ENCODE measurements at regions of chr20 and their contacts with region 1.

Region 1: DNA sequence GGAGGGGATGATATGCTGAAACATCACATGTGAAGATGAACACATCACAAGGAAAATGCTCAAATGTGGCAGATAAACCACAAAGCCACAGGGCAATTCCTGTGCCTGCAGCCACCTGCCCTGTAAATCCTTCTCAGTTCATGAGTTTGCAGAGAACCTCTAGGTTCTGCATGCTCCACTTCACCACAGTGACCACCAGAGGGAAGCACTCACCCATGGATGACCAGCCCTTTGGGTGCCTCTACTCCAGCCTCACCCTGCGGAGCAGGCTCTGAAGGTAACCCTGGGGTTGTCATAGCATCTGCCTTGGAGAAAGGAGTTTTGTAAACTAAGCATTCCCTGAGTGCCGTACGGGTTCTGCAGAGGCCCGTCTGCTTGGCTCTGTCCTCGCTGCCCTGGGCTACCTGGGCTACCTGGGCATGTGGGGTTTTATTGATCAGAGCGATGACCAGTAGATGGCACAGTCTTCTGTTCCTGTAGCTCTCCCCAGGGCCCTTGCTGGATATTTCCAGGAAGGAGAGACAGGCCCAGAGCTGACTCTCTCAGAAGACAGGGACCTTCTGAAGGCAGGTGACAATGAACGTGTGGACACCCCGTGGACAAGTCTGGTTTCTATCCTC is 31.7 kb upstream of the CST1 start:
- H3K4me3 ChIP-seq: no peak overlapping the region
- H3K27ac ChIP-seq: no peak overlapping the region
- H3K4me1 ChIP-seq: no peaks in the 10 kb centered on the region
- CTCF ChIP-seq: no peak

Region 2: DNA sequence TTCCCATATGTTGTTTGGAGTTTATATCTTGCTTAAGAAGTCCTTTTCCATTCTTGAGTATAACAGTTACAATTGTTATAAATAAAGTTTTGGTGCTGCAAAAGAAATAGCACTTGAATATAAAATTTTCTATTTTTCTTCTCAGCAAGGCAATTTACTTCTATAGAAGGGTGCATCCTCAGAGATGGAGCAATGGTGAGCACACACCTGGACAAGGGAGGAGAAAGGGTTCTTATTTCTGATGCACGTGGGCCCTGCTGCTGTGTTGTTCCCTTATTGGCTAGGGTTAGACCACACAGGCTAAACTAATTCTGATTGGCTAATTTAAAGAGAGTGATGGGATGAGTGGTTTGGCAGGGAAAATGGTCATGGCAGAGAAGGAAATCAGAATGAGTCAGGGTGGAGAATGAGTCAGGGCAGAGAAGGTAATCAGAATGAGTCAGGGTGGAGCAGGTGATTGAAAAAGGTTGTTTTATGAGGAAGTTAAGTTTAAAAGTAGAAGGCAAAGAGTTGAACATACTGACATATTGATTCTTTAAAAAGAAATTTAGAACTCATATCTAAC is 253.5 kb before region 1 on chr20:
- CTCF ChIA-PET with region 1: no interaction called
- POLR2A ChIA-PET with region 1: no interaction called
- H3K4me3 ChIP-seq: no peak overlapping the region
- H3K27ac ChIP-seq: no peak overlapping the region
- H3K4me1 ChIP-seq: no peaks in the 10 kb centered on the region
- CTCF ChIP-seq: no peak

Region 3: DNA sequence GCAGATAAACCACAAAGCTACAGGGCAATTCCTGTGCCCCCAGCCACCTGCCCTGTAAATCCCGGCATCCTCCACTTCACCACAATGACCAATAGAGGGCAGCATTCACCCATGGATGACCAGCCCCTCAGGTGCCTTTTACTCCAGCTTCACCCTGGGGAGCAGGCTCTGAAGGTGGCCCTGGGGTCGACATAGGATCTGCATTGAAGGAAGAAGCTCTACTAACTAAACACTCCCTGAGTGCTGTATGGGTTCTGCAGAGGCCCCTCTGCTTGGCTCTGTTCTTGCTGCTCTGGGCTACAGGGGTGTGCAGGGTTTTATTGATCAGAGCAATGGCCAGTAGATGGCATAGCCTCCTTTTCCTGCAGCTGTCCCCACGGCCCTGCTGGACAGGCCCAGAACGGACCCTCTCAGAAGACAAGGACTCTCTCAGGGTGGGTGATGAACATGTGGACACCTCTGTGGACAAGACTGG is 114.0 kb before region 1 on chr20:
- CTCF ChIA-PET with region 1: interaction called, 11 read pairs
- POLR2A ChIA-PET with region 1: no interaction called
- H3K4me3 ChIP-seq: no peak overlapping the region
- H3K27ac ChIP-seq: no peak overlapping the region
- H3K4me1 ChIP-seq: no peaks in the 10 kb centered on the region
- CTCF ChIP-seq: peak; percentile 66